Ovary (tissue), 10 donors: ENCODE measurements at regions of chrX and their contacts with region 1.

Region 1: DNA sequence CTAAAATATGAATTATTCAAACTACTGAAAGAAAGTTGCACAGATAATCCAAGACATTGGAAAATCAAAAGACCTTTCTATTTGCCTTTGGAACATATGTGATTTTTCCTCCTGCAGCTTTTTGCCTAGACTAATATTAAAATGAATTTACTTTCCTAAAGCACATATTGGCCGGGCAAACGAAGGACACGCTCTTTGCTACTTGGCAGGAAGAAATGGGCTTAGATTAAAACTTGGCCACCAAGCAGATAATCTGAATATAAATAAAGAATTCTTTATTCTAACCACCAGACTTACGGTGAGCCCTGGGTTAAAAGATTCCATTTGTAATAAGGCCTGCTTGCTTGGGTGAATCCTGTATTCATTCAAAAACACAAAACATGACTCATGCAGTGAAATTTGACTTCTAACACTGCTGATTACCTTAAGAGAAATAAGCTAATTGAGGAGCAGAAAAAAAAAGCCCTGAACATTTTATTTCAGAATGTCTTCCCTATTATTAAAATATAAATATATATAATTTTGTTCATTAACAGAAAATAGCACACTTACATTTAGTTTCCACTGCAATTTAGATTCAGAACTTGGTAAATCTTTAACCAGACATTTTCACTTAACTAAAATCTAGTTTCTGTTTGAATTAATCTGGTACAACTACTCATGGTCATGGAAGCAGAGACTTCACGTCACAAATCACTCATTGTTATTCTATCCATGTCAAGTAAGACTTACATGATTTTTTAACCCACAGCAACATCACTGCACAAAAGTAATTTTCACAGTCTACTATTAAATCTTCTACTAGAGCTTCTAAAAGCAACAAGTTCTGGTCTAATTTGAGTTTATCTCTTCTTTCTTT is 116.1 kb upstream of the PLAC1 start:
- DNase-seq: no peak
- H3K4me3 ChIP-seq: no peak overlapping the region
- H3K27ac ChIP-seq: no peak overlapping the region
- H3K4me1 ChIP-seq: no peaks in the 10 kb centered on the region
- H3K27me3 ChIP-seq: no peaks in the 10 kb centered on the region
- CTCF ChIP-seq: no peak
- EP300 ChIP-seq: no peak
- POLR2A ChIP-seq: no peak

Region 2: DNA sequence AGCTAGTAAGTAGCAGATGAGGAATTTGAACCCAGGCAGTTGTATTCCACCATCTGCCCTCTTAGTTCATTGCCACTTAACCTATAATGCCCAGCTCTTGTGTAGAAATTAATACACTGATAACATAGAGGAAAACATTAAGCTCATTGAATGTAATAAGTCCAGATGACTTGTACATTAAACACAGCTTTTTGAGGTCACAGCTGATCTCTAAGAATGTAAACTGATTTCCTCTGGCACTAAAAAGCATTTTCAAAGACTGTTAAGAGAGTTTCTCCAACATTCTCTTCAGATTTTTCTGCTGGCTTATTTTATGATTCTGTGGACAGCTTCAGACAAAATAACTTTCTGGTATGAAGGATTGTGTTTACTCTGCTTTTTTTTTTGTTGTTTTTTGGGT is 271.7 kb before region 1 on chrX:
- intact Hi-C with region 1: loop called in 1 of 4 experiments (anchors 10 kb)
- DNase-seq: no peak
- H3K4me3 ChIP-seq: no peak overlapping the region
- H3K27ac ChIP-seq: no peak overlapping the region
- H3K4me1 ChIP-seq: peaks cover 2% of the 10 kb centered on the region
- H3K27me3 ChIP-seq: no peaks in the 10 kb centered on the region
- CTCF ChIP-seq: no peak
- EP300 ChIP-seq: no peak
- POLR2A ChIP-seq: no peak

Region 3: GRCh38 chrX:134613396-134613795 is 161.0 kb before region 1 on chrX:
- intact Hi-C with region 1: no loop called
- DNase-seq: no peak
- H3K4me3 ChIP-seq: no peak overlapping the region
- H3K27ac ChIP-seq: no peak overlapping the region
- H3K4me1 ChIP-seq: no peaks in the 10 kb centered on the region
- H3K27me3 ChIP-seq: no peaks in the 10 kb centered on the region
- CTCF ChIP-seq: no peak
- EP300 ChIP-seq: no peak
- POLR2A ChIP-seq: no peak

Region 4: DNA sequence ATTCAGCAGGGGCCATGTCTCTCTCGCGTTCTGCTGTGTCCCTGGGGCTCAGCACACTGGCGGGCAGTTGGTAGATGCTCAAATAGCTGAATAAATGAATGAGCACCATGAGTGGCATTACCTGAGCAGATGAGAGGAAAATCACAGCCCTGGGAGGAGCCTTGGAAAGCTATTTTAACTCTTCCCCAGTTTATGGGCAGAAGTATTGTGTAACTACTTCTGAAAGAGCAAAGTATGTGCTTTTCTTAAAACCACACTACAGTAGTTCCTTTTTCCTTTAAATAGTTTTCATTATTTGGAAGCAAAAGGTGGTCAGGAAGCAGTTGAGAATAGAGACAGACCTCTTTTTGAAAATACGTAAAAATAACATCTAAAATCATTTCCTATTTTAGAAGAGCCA is 113.1 kb before region 1 on chrX:
- intact Hi-C with region 1: no loop called
- DNase-seq: no peak
- H3K4me3 ChIP-seq: no peak overlapping the region
- H3K27ac ChIP-seq: no peak overlapping the region
- H3K4me1 ChIP-seq: no peaks in the 10 kb centered on the region
- H3K27me3 ChIP-seq: no peaks in the 10 kb centered on the region
- CTCF ChIP-seq: no peak
- EP300 ChIP-seq: no peak
- POLR2A ChIP-seq: no peak

Region 5: DNA sequence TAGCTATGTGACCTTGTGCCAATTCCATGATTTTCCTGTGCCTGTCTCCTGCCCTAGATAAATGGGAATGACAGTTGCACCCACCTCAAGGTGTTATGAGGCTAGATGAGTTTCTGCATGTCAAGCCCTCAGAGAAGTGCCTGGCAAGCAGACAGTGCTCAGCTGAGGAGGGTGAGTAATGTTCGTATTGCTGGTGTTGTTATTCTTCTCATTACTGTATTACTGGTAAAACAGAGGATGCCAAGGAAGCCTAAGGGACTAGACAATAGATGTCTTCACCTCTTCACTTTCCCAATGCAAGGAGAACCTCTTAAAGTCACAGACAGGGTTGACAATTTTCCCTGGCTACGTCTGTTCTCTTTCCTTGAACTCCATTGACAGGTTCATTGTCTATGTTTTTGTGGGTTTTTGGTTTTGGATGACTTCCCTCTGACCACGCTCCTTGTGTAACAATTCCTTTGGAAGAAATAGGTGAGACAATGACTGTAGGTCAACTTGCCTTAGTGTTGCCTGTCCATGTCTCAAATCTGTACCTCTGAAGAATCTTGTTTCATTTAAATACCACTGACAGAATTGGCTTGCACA is 554.1 kb after region 1 on chrX:
- intact Hi-C with region 1: no loop called
- DNase-seq: no peak
- H3K4me3 ChIP-seq: no peak overlapping the region
- H3K27ac ChIP-seq: no peak overlapping the region
- H3K4me1 ChIP-seq: no peaks in the 10 kb centered on the region
- H3K27me3 ChIP-seq: no peaks in the 10 kb centered on the region
- CTCF ChIP-seq: no peak
- EP300 ChIP-seq: no peak
- POLR2A ChIP-seq: no peak